ENCODE measurements at regions of chr14 and their contacts with region 1.

Region 1: DNA sequence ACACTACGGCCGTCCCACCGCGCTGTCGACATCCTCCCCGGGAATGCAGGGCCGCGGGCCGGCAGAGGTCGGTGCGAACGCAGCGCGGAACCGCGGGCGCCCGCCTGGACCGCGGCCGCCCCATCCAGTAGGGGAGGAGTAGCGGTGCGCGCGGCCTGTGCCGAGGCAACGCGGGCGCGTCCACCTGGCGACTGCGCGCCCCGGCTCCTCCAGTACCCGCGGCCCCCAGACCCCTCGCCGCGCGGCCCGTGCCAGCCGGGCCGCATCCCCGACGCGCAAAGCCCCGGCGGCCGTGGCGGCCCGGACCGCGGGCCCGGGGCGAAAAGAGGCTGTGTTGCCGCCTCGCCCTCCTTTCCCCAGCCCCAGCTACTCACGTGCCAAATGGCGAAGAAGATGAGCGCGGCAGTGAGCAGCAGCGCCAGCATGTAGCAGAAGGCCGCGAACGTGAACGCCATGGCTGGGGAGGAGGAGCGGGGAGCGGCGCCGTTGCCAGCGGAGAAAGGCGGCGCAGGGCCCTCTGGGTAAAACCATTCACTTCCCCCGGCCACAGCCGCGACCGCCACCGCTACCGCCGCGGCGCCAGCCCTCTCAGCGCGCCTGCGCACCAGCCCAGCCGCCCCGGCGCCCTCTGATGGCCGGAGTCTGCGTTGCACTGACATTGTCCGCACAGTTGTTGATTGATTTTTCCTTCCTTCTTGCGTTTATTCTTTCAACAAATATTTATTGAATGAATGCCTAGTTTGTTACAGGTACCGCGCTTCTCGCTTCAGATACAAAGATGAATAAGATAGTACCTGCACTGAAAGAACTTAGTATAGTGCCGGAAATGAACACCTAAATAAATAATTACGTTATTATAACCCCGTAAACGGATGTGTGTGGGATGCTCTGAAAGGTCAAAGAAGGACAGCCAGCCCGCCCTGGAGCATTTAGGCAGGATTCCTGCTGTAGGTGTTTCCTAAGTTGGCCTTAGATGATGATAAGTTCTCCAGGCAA is at the start of gene CNIH1:
- DNase-seq: peak; percentile 94
- ATAC-seq: peak; percentile 95
- H3K4me3 Mint-ChIP-seq: peak within 1 kb of the TSS; percentile 89
- H3K27ac Mint-ChIP-seq: peak within 1 kb of the TSS; percentile 90
- H3K4me1 Mint-ChIP-seq: peaks cover 42% of the 10 kb centered on the region
- H3K27me3 Mint-ChIP-seq: peaks cover 13% of the 10 kb centered on the region
- total RNA-seq, gene CNIH1: 39.8 to 61.9 TPM

Region 2: DNA sequence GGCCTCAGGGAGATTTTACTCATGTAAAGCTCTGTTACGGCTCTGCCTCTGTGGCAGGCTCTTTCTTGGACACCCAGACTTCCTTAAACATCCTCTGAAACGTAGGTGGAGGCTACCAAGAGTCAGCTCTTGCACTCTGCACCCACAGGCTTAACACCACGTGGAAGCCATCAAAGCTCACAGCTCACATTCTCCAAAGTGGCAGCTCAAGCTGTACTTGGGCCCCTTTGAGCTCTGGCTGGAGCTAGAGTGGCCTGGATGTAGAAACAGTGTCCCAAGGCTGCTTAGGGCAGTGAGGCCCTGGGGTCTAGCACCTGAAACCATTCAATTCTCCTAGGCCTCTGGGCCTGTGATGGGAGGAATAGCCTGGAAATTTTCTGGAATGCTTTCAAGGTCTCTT is 199.7 kb before region 1 on chr14:
- CTCF ChIA-PET with region 1: no interaction called
- DNase-seq: no peak
- ATAC-seq: no peak
- H3K4me3 Mint-ChIP-seq: no peak overlapping the region
- H3K27ac Mint-ChIP-seq: no peak overlapping the region
- H3K4me1 Mint-ChIP-seq: no peaks in the 10 kb centered on the region
- H3K27me3 Mint-ChIP-seq: no peaks in the 10 kb centered on the region

Region 3: GRCh38 chr14:54396493-54397335 is 44.5 kb before region 1 on chr14 and contains the start of gene CDKN3:
- CTCF ChIA-PET with region 1: interaction called, 15 read pairs
- DNase-seq: peak; percentile 99
- ATAC-seq: peak; percentile 97
- H3K4me3 Mint-ChIP-seq: peak within 1 kb of the TSS; percentile 83
- H3K27ac Mint-ChIP-seq: peak within 1 kb of the TSS; percentile 90
- H3K4me1 Mint-ChIP-seq: peaks cover 24% of the 10 kb centered on the region
- H3K27me3 Mint-ChIP-seq: no peaks in the 10 kb centered on the region
- total RNA-seq, gene CDKN3: 82.6 to 96.0 TPM